Activated B cell treated with CpG ODN at 0.5 μM for 24 hours (primary cell): ENCODE measurements at regions of chrX and their contacts with region 1.

Region 1: DNA sequence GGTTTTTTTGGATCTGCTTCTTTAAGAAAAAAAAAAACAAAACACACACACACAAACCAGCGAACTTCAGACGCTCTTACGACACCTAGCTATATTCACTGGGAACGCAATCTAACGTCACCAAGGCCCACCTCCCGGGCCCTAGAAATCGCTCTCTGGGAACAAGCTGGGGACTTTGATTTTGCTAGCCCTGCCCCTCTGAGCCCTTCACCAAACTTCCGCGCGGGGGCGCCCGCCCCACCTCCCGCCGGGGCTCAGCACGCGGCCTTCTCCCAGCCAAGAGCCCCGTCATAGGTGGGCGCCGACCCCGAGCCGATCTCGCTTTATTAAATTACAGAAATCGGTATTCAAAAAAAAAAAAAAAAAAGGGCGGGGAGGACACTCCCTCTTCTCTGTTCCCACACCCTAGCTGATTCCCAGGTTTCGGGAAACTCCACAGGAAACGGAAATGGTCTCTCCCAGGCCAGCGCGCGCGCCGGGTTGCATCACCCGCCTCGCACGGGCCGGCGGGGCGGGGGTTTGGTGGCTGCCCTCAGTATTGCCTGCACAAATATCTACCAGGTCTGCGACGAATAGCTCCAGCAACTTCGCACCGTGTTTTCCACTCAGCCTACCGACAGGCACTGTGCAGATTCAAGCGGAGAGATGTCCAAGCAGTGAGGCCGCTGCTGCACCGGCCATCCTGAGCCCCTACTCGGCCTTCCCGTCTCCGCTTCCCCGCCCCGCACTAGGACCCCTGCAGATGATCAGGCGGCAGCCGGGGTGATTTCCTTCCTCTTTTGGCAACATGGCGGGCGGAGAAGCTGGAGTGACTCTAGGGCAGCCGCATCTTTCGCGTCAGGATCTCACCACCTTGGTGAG is at the start of gene EIF2S3:
- DNase-seq: peak; percentile 73
- ATAC-seq: peak; percentile 80
- H3K4me3 Mint-ChIP-seq: no peak within 1 kb of the TSS
- H3K27ac Mint-ChIP-seq: peak within 1 kb of the TSS; percentile 99
- H3K4me1 Mint-ChIP-seq: peaks cover 4% of the 10 kb centered on the region
- H3K27me3 Mint-ChIP-seq: no peaks in the 10 kb centered on the region
- CTCF ChIP-seq: no peak
- total RNA-seq, gene EIF2S3: 281 and 314 TPM in 2 replicates

Region 2: GRCh38 chrX:23694606-23695005 is 359.8 kb before region 1 on chrX:
- CTCF ChIA-PET with region 1: no interaction called
- POLR2A ChIA-PET with region 1: interaction called, 4 read pairs
- intact Hi-C with region 1: loop called (anchors 10 kb)
- DNase-seq: no peak
- ATAC-seq: peak; percentile 78
- H3K4me3 Mint-ChIP-seq: no peak overlapping the region
- H3K27ac Mint-ChIP-seq: no peak overlapping the region
- H3K4me1 Mint-ChIP-seq: no peaks in the 10 kb centered on the region
- H3K27me3 Mint-ChIP-seq: no peaks in the 10 kb centered on the region
- CTCF ChIP-seq: no peak

Region 3: GRCh38 chrX:23742697-23743622 is 311.5 kb before region 1 on chrX and contains the start of gene ACOT9:
- CTCF ChIA-PET with region 1: no interaction called
- POLR2A ChIA-PET with region 1: interaction called, 8 read pairs
- intact Hi-C with region 1: loop called (anchors 2 kb)
- DNase-seq: peak; percentile 66
- ATAC-seq: peak; percentile 90
- H3K4me3 Mint-ChIP-seq: peak within 1 kb of the TSS; percentile 92
- H3K27ac Mint-ChIP-seq: peak within 1 kb of the TSS; percentile 92
- H3K4me1 Mint-ChIP-seq: peaks cover 34% of the 10 kb centered on the region
- H3K27me3 Mint-ChIP-seq: no peaks in the 10 kb centered on the region
- CTCF ChIP-seq: no peak
- total RNA-seq, gene ACOT9: 46.0 and 49.4 TPM in 2 replicates

Region 4: GRCh38 chrX:23907498-23908218 is 146.8 kb before region 1 on chrX and contains the starts of genes APOO and CXorf58:
- CTCF ChIA-PET with region 1: interaction called, 32 read pairs
- POLR2A ChIA-PET with region 1: interaction called, 59 read pairs
- intact Hi-C with region 1: loop called (anchors 1 kb)
- DNase-seq: peak; percentile 85
- ATAC-seq: peak; percentile 90
- H3K4me3 Mint-ChIP-seq: peak within 1 kb of the TSS; percentile 82
- H3K27ac Mint-ChIP-seq: peak within 1 kb of the TSS; percentile 88
- H3K4me1 Mint-ChIP-seq: peaks cover 17% of the 10 kb centered on the region
- H3K27me3 Mint-ChIP-seq: no peaks in the 10 kb centered on the region
- CTCF ChIP-seq: peak; percentile 7
- total RNA-seq, gene APOO: 14.0 and 16.6 TPM in 2 replicates
- total RNA-seq, gene CXorf58: not detected in 2 replicates

Region 5: GRCh38 chrX:24024819-24025740 is 29.3 kb before region 1 on chrX:
- CTCF ChIA-PET with region 1: interaction called, 22 read pairs
- POLR2A ChIA-PET with region 1: interaction called, 113 read pairs
- intact Hi-C with region 1: loop called (anchors 1 kb)
- DNase-seq: peak; percentile 70
- ATAC-seq: peak; percentile 91
- H3K4me3 Mint-ChIP-seq: peak overlapping the region; percentile 85
- H3K27ac Mint-ChIP-seq: peak overlapping the region; percentile 82
- H3K4me1 Mint-ChIP-seq: peaks cover 21% of the 10 kb centered on the region
- H3K27me3 Mint-ChIP-seq: no peaks in the 10 kb centered on the region
- CTCF ChIP-seq: no peak